ENCODE measurements at regions of chr3 and their contacts with region 1.

Region 1: DNA sequence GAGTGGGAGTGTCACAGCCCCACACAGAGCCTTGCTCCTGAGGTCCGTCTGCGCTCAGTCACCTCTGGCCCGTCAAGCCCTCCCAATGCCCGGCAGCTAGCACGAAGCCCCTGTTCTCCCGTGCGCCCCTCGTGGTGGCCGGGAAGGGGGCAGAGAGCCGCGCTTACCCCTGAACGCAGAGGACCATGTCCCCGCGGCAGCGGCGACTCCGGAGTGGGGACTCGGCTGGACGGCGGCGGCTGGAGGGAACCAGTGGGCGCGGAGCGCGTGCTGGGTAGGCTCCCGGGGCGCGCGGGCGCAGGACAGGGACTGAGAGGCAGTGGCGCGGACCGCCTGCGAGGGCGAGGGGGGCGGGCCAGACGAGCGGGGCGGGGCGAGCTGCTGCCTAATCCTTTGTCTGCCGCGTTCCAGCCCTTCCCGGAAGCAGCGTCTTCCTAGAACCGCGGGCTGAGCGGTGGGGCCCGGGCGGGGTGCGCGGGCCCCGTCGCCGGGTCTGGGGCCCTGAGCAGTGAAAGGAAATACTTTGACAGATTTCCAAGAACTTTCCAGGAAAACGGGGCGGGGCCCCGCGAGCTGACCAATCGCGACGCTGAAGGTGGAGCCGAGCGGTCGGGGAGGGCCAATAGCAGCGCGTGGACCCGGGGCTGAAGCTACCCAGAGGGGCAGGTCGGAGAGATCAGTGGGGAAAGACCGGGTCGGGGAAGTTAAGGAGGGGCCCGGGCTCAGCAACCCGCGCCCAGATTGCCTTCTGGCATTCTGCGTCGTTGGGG is at the start of gene CISH:
- DNase-seq: peak; percentile 99
- ATAC-seq: peak; percentile 73
- H3K4me3 Mint-ChIP-seq: peak within 1 kb of the TSS; percentile 94
- H3K27ac Mint-ChIP-seq: peak within 1 kb of the TSS; percentile 97
- H3K4me1 Mint-ChIP-seq: peaks cover 31% of the 10 kb centered on the region
- H3K27me3 Mint-ChIP-seq: no peaks in the 10 kb centered on the region
- total RNA-seq, gene CISH: 380 to 394 TPM

Region 2: DNA sequence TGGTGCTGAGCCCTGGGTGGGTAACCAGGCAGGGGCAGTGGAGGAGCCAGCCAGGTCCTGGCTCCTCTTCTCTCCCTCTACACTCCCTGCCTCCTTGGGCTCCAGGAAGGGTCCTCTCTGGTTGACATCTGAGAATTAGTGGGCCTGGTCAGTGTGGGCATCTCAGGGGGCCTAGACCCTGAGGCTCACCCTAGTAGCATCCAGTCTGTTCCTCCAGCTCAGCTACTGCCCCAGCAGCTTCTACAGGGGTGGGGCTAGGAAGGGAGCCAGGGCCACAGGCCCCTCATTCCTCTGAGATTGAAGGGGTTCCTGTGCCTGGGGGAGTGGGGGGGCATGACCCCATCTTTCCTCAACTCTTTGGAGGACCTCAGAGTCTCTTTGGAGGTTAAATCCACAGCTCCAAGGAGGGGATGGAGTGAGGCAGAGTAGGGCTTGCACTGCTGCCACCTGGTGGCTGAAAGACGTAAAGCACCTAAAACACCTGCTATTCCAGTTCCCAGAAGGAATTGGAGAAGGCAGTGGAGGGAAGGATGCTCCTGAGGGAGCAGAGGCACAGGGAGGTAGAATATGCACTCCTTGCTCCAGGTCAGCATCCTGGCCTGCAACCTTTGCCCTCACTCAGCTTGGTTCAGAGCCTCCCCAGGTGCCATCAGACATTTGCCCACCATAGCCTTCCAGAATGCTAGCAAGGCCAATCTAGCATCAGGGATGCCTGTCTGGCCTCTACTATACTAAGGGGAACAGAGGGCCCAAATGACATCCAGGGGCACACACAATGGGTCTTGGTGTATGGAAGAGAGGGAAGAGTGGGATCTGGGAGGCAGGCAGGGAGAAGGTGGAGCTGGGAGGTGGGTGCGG is 69.2 kb before region 1 on chr3:
- CTCF ChIA-PET with region 1: interaction called, 14 read pairs
- POLR2A ChIA-PET with region 1: interaction called, 3 read pairs
- DNase-seq: peak; percentile 71
- ATAC-seq: peak; percentile 73
- H3K4me3 Mint-ChIP-seq: no peak overlapping the region
- H3K27ac Mint-ChIP-seq: no peak overlapping the region
- H3K4me1 Mint-ChIP-seq: no peaks in the 10 kb centered on the region
- H3K27me3 Mint-ChIP-seq: peaks cover 30% of the 10 kb centered on the region

Region 3: DNA sequence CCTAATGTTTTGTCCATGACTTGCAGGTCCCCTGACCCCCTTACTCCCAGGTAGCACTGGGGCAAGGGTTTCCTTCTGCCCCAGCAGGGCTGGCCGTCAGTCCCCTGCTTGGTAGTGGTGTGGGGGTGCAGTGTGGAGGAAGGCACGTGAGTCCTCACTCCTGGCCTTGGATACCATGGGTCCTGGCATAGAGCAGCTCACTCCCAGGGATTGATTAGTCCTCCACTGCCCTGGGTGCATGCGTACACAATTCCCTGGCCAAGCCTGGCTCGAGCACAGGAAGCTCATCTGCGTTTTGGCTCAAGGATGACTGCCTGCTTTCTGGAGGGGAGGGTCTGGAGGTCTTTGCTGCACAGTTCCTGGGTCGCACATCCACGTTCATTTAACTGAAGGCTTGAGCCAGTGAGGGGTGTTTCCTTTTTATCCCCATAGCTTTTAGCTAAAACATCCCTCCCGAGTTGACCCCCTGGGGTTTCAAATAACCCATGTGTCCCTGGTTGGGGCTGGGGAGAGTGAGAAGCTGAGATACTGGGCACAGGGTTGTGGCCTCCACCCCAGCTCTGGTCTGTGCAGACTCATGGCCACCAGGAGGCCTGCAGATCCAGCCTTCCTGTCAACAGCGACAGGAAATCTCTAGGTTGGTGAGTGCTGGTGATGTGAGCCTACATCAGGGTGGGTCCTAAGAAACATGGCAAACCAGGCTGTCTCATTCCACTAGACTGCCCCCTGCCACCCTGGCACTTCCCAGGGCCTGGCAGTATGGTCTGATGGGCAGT is 30.8 kb before region 1 on chr3:
- CTCF ChIA-PET with region 1: interaction called, 1,321 read pairs
- POLR2A ChIA-PET with region 1: interaction called, 1,664 read pairs
- DNase-seq: no peak
- ATAC-seq: peak; percentile 40
- H3K4me3 Mint-ChIP-seq: no peak overlapping the region
- H3K27ac Mint-ChIP-seq: peak overlapping the region; percentile 84
- H3K4me1 Mint-ChIP-seq: peaks cover 94% of the 10 kb centered on the region
- H3K27me3 Mint-ChIP-seq: no peaks in the 10 kb centered on the region

Region 4: GRCh38 chr3:50627407-50628051 is 15.9 kb after region 1 on chr3:
- CTCF ChIA-PET with region 1: interaction called, 143 read pairs
- POLR2A ChIA-PET with region 1: interaction called, 10 read pairs
- DNase-seq: peak; percentile 36
- ATAC-seq: no peak
- H3K4me3 Mint-ChIP-seq: no peak overlapping the region
- H3K27ac Mint-ChIP-seq: peak overlapping the region; percentile 55
- H3K4me1 Mint-ChIP-seq: peaks cover 99% of the 10 kb centered on the region
- H3K27me3 Mint-ChIP-seq: no peaks in the 10 kb centered on the region

Region 5: GRCh38 chr3:50971487-50971924 is 359.9 kb after region 1 on chr3:
- CTCF ChIA-PET with region 1: interaction called, 11 read pairs
- POLR2A ChIA-PET with region 1: no interaction called
- DNase-seq: peak; percentile 72
- ATAC-seq: peak; percentile 97
- H3K4me3 Mint-ChIP-seq: no peak overlapping the region
- H3K27ac Mint-ChIP-seq: peak overlapping the region; percentile 43
- H3K4me1 Mint-ChIP-seq: peaks cover 16% of the 10 kb centered on the region
- H3K27me3 Mint-ChIP-seq: no peaks in the 10 kb centered on the region

Region 6: GRCh38 chr3:51391075-51391567 is 779.5 kb after region 1 on chr3 and contains the start of gene RBM15B:
- CTCF ChIA-PET with region 1: interaction called, 106 read pairs
- POLR2A ChIA-PET with region 1: interaction called, 6 read pairs
- DNase-seq: peak; percentile 98
- ATAC-seq: peak; percentile 95
- H3K4me3 Mint-ChIP-seq: peak within 1 kb of the TSS; percentile 83
- H3K27ac Mint-ChIP-seq: peak within 1 kb of the TSS; percentile 94
- H3K4me1 Mint-ChIP-seq: peaks cover 79% of the 10 kb centered on the region
- H3K27me3 Mint-ChIP-seq: no peaks in the 10 kb centered on the region
- total RNA-seq, gene RBM15B: 30.7 to 30.8 TPM

Measured in activated CD8-positive, alpha-beta T cell treated with anti-CD3 and anti-CD28 coated beads, Interleukin-2, amount 10 ng/mL, durations not matched to agents 7 days and 5 days (primary cell).